Activated CD4-positive, alpha-beta memory T cell treated with anti-CD3 and anti-CD28 coated beads for 36 hours (primary cell): ENCODE measurements at regions of chr16 and their contacts with region 1.

Region 1: DNA sequence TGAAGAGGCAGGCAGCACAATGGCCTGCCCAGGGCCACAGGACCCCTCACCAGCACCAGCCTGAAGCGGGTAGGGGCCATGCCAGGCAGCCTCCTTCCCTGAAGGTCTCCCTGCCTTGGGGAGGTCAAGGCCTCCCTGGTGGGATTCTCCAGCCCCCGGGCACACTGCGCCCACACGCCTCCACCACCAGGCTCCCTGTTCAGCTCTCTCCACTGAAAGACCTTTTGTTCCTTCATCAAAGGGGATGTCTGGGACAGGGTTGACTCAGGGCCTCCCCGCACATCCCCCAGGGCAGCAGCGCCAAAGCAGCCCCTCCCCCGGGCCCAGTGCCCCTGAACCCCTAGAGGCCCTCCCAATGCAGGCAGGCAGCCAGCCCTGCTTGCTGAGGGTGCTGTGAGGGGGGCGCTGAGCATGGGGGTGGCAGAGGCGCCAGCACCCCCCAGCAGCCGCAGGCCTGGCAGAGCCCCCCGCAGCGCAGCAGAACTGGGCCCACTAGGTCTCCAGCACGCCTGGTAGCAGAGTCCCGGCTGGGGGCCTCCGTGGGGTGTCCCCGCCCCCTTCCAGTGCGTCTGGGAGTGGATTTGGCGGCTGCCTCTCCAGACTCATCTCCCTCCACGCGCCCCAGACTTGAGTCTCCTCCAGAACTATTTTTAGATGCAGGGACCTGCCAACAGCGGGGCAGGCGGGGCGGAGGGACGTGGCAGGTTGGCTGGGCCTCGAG is 13.1 kb downstream of the BCAR1 start:
- DNase-seq: no peak
- H3K4me3 Mint-ChIP-seq: no peak overlapping the region
- H3K27ac Mint-ChIP-seq: no peak overlapping the region
- H3K4me1 Mint-ChIP-seq: peaks cover 2% of the 10 kb centered on the region
- H3K27me3 Mint-ChIP-seq: no peaks in the 10 kb centered on the region

Region 2: DNA sequence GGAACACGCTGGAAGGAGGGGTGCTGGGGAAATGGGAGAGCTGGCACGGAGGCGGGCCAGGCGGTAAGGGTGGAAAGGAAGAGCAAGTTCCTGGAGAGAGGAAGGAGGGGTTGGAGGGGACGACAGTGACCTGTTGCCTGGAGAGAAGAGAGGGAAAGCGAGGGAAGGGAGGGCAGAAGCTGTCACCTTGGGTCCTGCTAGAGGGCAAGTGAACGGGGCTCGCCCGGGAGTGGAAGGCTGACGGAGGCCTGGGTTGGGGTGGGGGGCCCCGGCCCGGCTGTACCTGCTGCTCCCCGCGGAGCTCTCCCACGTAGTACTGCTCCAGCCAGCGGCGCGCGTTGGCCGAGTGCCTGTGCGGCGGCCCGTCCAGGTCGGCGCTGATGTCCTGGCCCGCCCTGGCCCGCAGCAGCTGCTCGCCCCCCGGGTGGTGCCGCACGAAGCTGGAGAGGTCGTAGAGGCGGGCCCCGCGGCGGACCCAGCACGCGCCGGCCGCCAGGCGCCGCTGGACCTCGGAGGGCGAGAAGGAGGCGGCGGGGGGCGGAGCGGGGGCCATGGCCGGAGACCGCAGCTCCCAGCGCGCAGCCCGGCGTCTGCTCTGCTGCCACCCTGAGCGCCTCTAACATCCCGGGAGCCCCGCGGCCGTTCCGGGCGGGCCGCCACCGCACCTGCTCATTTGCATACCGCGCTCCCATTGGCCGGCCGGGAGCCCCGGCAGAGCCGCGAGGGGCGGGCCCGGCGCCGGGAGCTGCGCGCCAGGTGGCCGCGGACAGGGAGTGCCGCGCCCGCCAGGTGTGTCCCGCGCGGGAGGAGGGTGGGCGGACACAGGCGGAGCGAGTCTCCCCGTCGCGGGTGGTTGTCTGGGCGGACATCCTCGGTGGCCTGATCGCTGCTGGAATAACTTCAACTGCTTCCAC is 463.8 kb before region 1 on chr16 and contains the start of gene FA2H:
- CTCF ChIA-PET with region 1: no interaction called
- POLR2A ChIA-PET with region 1: no interaction called
- intact Hi-C with region 1: no loop called
- DNase-seq: peak; percentile 81
- H3K4me3 Mint-ChIP-seq: peak within 1 kb of the TSS; percentile 17
- H3K27ac Mint-ChIP-seq: no peak within 1 kb of the TSS
- H3K4me1 Mint-ChIP-seq: peaks cover 11% of the 10 kb centered on the region
- H3K27me3 Mint-ChIP-seq: peaks cover 31% of the 10 kb centered on the region
- total RNA-seq, gene FA2H: 0.22 TPM in 1 of 2 experiments, not detected in the other

Region 3: DNA sequence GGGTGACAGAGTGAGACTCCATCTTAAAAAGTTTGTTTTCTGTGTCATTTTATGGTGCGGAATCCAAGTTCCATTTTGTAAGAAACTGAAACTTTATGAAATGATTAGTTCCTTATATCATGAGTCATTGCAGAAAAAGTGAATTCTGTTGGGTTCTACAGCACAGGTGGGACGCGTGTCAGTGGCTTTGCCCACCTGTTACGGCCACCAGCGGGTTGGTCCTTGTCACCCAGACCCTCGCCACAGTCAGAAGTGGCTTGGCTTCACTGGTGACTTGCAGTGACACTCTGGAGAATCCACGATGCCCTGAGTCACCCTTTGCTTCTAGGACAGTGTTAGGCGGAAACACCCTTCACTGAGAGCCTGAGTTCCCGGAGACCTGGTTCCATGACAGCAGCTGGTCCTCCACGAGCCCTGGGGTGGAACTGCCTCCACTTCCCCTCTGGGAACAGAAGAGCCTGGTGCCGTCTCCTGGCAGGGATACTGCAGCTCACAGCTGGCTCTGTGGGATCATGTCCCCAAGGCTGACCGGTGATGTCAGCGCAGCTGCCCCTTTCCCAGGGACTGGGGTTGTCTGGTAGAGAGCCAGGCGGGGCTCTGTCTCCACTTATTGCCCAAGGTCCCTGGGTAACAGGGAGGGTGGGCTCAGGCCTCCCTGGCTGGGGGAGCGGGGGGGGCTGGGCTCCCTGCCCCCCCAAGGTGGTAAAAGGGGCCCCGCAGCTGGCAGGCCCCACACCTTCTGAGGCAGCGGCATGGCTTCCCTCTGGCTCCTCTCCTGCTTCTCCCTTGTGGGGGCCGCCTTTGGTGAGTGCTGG is 19.8 kb before region 1 on chr16 and contains the start of gene CTRB1:
- CTCF ChIA-PET with region 1: interaction called, 15 read pairs
- POLR2A ChIA-PET with region 1: no interaction called
- intact Hi-C with region 1: no loop called
- DNase-seq: peak; percentile 37
- H3K4me3 Mint-ChIP-seq: peak within 1 kb of the TSS; percentile 61
- H3K27ac Mint-ChIP-seq: peak within 1 kb of the TSS; percentile 75
- H3K4me1 Mint-ChIP-seq: peaks cover 10% of the 10 kb centered on the region
- H3K27me3 Mint-ChIP-seq: no peaks in the 10 kb centered on the region
- total RNA-seq, gene CTRB1: not detected

Region 4: GRCh38 chr16:75361936-75362335 is 123.6 kb after region 1 on chr16:
- CTCF ChIA-PET with region 1: interaction called, 13 read pairs
- POLR2A ChIA-PET with region 1: no interaction called
- intact Hi-C with region 1: no loop called
- DNase-seq: no peak
- H3K4me3 Mint-ChIP-seq: no peak overlapping the region
- H3K27ac Mint-ChIP-seq: no peak overlapping the region
- H3K4me1 Mint-ChIP-seq: no peaks in the 10 kb centered on the region
- H3K27me3 Mint-ChIP-seq: no peaks in the 10 kb centered on the region

Region 5: DNA sequence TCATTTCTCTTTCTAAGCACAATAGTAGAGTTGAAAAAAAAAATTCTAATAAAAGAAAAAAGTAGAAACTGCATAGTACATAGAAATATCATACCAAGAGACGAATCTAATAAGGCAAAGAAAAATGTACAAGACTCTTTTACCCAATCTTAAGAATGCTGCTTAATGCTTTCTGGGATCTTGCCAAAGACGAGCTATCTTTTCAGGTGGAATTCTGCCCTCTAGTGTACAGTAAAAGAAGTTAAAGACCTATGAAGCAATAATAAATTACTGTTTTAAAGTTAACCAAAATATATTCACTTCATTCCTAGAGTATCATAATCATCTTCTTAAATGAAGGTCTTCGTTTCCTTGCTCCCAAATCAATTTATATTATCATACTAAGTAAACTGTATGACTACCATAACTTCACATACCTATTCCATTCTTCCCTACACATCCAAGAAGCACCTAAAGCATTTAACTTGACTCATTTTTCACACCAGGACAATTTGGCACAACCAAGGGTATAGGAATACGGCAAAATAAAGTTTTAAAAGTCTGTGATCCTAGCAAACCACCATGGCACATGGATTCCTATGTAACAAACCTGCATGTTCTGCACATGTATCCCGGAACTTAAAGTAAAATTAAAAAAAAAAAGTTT is 147.3 kb after region 1 on chr16:
- CTCF ChIA-PET with region 1: interaction called, 184 read pairs
- POLR2A ChIA-PET with region 1: interaction called, 3 read pairs
- intact Hi-C with region 1: loop called (anchors 1 kb)
- DNase-seq: no peak
- H3K4me3 Mint-ChIP-seq: no peak overlapping the region
- H3K27ac Mint-ChIP-seq: no peak overlapping the region
- H3K4me1 Mint-ChIP-seq: peaks cover 22% of the 10 kb centered on the region
- H3K27me3 Mint-ChIP-seq: no peaks in the 10 kb centered on the region

Region 6: GRCh38 chr16:75402821-75403475 is 164.7 kb after region 1 on chr16:
- CTCF ChIA-PET with region 1: interaction called, 44 read pairs
- POLR2A ChIA-PET with region 1: no interaction called
- intact Hi-C with region 1: loop called (anchors 1 kb)
- DNase-seq: no peak
- H3K4me3 Mint-ChIP-seq: no peak overlapping the region
- H3K27ac Mint-ChIP-seq: no peak overlapping the region
- H3K4me1 Mint-ChIP-seq: peaks cover 16% of the 10 kb centered on the region
- H3K27me3 Mint-ChIP-seq: no peaks in the 10 kb centered on the region